ENCODE measurements at regions of chr14 and their contacts with region 1.

Region 1: GRCh38 chr14:88189417-88190191 is 133.5 kb downstream of the KCNK10 start:
- DNase-seq: peak in 5 of 10 donors; percentile 32 to 83 (median 72)

Region 2: GRCh38 chr14:87944987-87945604 is 244.5 kb before region 1 on chr14:
- intact Hi-C with region 1: loop called (anchors 10 kb)
- DNase-seq: no peak

Measured in posterior cingulate gyrus (tissue), 11 donors.